Heart left ventricle (tissue), 16 donors: ENCODE measurements at regions of chr13 and their contacts with region 1.

Region 1: GRCh38 chr13:36736119-36736726 is 62.4 kb downstream of the SERTM1 start:
- DNase-seq: peak in 3 of 5 donors; percentile 24 to 28 (median 27)
- ATAC-seq: no peak
- H3K4me3 ChIP-seq: no peak overlapping the region
- H3K27ac ChIP-seq: no peak overlapping the region
- H3K4me1 ChIP-seq: no peaks in the 10 kb centered on the region
- H3K27me3 ChIP-seq: no peaks in the 10 kb centered on the region
- CTCF ChIP-seq: peak; percentile 56 to 81 (median 72)
- POLR2A ChIP-seq: no peak

Region 2: GRCh38 chr13:35978603-35979316 is 757.5 kb before region 1 on chr13:
- intact Hi-C with region 1: loop called in 3 of 10 experiments (anchors 10 kb)
- DNase-seq: peak in 1 of 5 donors; percentile 37
- ATAC-seq: peak in 2 of 4 donors; percentile 46 to 69
- H3K4me3 ChIP-seq: peak overlapping the region in 4 of 12 donors; percentile 2 to 19 (median 10)
- H3K27ac ChIP-seq: peak overlapping the region in 11 of 12 donors; percentile 36 to 81 (median 67)
- H3K4me1 ChIP-seq: peaks cover 0 to 17% (median 8%) of the 10 kb centered on the region in 12 donors
- H3K27me3 ChIP-seq: no peaks in the 10 kb centered on the region
- CTCF ChIP-seq: peak; percentile 71 to 94 (median 85)
- POLR2A ChIP-seq: no peak

Region 3: DNA sequence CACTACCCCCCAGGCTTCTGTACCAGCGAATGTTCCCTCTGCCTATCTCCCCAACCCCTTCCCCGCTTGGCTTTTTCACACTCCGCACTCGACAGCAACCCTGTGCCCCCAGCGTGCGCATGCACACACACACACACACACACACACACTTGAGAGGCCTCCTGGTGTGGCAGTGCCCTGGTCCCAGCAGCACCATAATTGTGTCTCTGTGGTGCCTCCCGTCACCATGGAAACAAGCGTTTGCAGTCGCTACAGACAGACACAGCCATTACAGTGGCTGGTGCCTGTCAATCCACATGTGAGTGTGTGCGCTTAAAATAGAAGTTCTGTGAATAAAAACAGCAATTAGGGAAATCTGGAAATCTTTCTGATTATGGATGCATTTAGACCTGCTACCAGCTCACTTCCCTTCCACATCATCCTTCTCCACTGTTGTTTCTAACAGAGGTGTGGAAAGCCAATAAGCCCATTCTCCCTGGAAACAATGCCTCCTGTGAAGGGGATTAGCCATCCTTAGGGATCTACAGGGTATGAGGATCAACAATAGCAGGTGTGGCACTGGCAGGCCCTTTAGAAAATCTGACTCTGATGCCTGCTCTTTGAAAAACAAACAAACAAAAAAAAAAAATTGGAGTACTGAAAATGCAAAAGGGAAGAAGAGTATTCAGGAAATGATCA is 751.3 kb before region 1 on chr13:
- intact Hi-C with region 1: loop called in 2 of 10 experiments (anchors 10 kb)
- DNase-seq: no peak
- ATAC-seq: peak in 3 of 4 donors; percentile 28 to 43 (median 36)
- H3K4me3 ChIP-seq: no peak overlapping the region
- H3K27ac ChIP-seq: no peak overlapping the region
- H3K4me1 ChIP-seq: peaks cover 0 to 4% (median 0%) of the 10 kb centered on the region in 12 donors
- H3K27me3 ChIP-seq: no peaks in the 10 kb centered on the region
- CTCF ChIP-seq: no peak
- POLR2A ChIP-seq: no peak

Region 4: GRCh38 chr13:36282818-36283445 is 453.3 kb before region 1 on chr13:
- intact Hi-C with region 1: loop called (anchors 2 to 10 kb)
- DNase-seq: no peak
- ATAC-seq: peak in 1 of 4 donors; percentile 36
- H3K4me3 ChIP-seq: no peak overlapping the region
- H3K27ac ChIP-seq: no peak overlapping the region
- H3K4me1 ChIP-seq: no peaks in the 10 kb centered on the region
- H3K27me3 ChIP-seq: no peaks in the 10 kb centered on the region
- CTCF ChIP-seq: peak; percentile 71 to 90 (median 78)
- POLR2A ChIP-seq: no peak

Region 5: GRCh38 chr13:36346222-36347083 is 389.8 kb before region 1 on chr13 and contains the start of gene SPART:
- intact Hi-C with region 1: loop called in 1 of 10 experiments (anchors 10 kb)
- DNase-seq: peak; percentile 91 to 95 (median 94)
- ATAC-seq: peak; percentile 95 to 96 (median 96)
- H3K4me3 ChIP-seq: peak within 1 kb of the TSS; percentile 65 to 91 (median 81)
- H3K27ac ChIP-seq: peak within 1 kb of the TSS; percentile 95 to 99 (median 98)
- H3K4me1 ChIP-seq: peaks cover 0 to 38% (median 19%) of the 10 kb centered on the region in 12 donors
- H3K27me3 ChIP-seq: no peaks in the 10 kb centered on the region
- CTCF ChIP-seq: peak; percentile 95 to 99 (median 98)
- POLR2A ChIP-seq: peak in 1 of 2 donors; percentile 46
- total RNA-seq, gene SPART: 31.0 to 41.5 (median 34.7) TPM

Region 6: DNA sequence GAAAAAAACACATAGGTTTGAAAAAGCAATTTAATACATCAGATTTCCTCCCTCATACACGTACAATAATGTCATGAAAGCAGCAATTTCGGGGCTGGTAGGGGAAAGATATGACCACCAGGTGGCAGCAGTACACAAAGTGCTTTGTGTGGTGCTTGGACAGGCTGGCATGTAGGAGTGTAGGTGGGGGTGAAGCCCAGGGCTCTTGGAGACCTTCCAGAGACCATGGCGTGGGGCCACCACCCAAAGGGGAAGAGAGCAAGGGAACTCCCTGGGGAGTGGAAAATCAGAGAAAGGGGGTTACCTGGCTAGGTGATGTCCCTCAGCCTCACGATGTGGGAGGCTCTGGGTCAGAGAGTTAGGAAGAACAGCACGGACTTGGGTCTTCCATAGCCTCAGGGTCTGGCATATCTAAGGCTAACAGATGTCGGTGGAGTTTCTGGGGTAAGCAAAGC is 315.8 kb before region 1 on chr13:
- intact Hi-C with region 1: loop called in 4 of 10 experiments (anchors 5 to 10 kb)
- DNase-seq: peak in 4 of 5 donors; percentile 48 to 59 (median 56)
- ATAC-seq: peak in 3 of 4 donors; percentile 74 to 84 (median 84)
- H3K4me3 ChIP-seq: no peak overlapping the region
- H3K27ac ChIP-seq: no peak overlapping the region
- H3K4me1 ChIP-seq: peaks cover 0 to 15% (median 0%) of the 10 kb centered on the region in 12 donors
- H3K27me3 ChIP-seq: peaks cover 0 to 13% (median 0%) of the 10 kb centered on the region in 9 donors
- CTCF ChIP-seq: peak; percentile 73 to 93 (median 84)
- POLR2A ChIP-seq: no peak

Region 7: GRCh38 chr13:36453516-36453915 is 282.7 kb before region 1 on chr13:
- intact Hi-C with region 1: loop called in 9 of 10 experiments (anchors 2 to 5 kb)
- DNase-seq: no peak
- ATAC-seq: peak in 3 of 4 donors; percentile 50 to 68 (median 55)
- H3K4me3 ChIP-seq: no peak overlapping the region
- H3K27ac ChIP-seq: no peak overlapping the region
- H3K4me1 ChIP-seq: no peaks in the 10 kb centered on the region
- H3K27me3 ChIP-seq: no peaks in the 10 kb centered on the region
- CTCF ChIP-seq: peak in 10 of 12 donors; percentile 15 to 54 (median 43)
- POLR2A ChIP-seq: no peak

Region 8: DNA sequence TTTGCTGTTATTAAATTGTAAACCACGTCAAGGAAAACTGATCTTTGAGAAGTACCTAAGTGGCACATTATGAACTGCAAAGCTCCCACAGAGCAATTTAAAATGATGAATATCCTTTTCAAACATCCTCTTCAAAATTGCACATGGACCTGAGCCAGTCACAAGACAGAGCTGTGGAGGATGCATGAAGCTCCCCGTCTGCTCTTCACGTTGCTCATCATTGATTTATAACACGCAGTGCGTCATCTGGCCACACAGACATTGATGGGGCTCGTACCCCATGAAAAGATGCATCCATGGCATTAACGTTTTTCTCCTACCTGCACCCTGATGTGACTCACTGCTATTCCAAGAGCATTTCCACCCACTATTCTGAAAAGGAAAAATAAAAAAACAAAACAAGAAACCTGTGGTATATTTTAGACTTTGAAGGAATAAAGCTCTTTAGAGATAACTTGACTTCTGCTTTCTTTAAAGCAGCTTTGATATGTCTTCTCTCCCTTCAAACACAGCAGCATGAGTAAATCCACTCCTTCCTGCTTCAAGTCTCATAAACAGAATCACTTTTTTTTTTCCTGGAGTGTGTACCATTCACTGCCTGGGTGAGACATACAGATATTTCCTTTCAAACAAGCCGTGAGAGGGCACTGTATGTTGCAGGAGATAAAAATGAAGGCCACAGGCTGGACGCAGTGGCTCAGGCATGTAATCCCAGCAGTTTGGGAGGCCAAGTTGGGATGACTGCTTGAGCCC is 69.6 kb before region 1 on chr13:
- intact Hi-C with region 1: no loop called
- DNase-seq: no peak
- ATAC-seq: no peak
- H3K4me3 ChIP-seq: no peak overlapping the region
- H3K27ac ChIP-seq: no peak overlapping the region
- H3K4me1 ChIP-seq: no peaks in the 10 kb centered on the region
- H3K27me3 ChIP-seq: peaks cover 0 to 4% (median 0%) of the 10 kb centered on the region in 9 donors
- CTCF ChIP-seq: no peak
- POLR2A ChIP-seq: no peak

Region 9: GRCh38 chr13:36700170-36700569 is 36.1 kb before region 1 on chr13:
- intact Hi-C with region 1: no loop called
- DNase-seq: no peak
- ATAC-seq: no peak
- H3K4me3 ChIP-seq: no peak overlapping the region
- H3K27ac ChIP-seq: no peak overlapping the region
- H3K4me1 ChIP-seq: no peaks in the 10 kb centered on the region
- H3K27me3 ChIP-seq: peaks cover 0 to 8% (median 0%) of the 10 kb centered on the region in 9 donors
- CTCF ChIP-seq: no peak
- POLR2A ChIP-seq: no peak